ENCODE measurements at regions of chr7 and their contacts with region 1.

Region 1: DNA sequence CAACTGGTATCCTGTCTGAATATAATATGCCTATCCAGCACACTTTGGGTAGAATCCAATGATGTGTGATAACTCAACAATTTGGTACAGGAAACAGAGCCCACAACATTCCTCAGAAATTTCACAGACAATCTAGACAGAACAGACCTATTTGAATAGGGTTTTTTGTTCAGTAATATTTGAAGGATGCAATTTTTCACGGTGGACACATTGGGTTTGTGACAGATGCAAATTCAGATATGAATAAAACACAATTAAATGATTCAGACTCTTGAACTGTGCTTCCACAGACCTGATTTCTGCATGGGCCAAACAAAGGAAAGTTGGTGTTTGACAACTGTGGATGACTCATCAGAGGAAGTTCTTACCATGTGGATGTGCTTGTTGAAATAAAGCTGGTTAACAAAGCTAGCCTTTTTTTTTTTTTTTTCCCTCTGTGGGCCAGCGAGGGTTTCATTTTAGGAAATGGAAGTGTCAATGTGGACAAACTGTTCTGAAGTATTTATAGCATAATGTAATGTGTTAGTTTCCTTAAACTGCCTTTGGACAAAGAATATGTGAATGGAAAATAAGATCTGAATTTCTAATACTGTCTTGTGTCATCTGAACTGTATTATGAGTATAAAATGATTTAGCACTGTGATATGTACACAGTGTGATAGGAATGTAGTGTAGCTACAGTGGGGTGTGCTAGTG is 43.2 kb upstream of the FAM133B start:
- DNase-seq: peak in 1 of 2 donors; percentile 57
- ATAC-seq: peak; percentile 79 to 86 (median 80)
- H3K4me3 ChIP-seq: no peak overlapping the region
- H3K4me3 Mint-ChIP-seq: peak overlapping the region; percentile 68
- H3K27ac ChIP-seq: peak overlapping the region; percentile 37
- H3K27ac Mint-ChIP-seq: peak overlapping the region; percentile 90 to 92
- H3K4me1 ChIP-seq: peaks cover 3% of the 10 kb centered on the region
- H3K4me1 Mint-ChIP-seq: peaks cover 42 to 48% of the 10 kb centered on the region in 2 donors
- H3K27me3 ChIP-seq: no peaks in the 10 kb centered on the region
- H3K27me3 Mint-ChIP-seq: no peaks in the 10 kb centered on the region
- CTCF ChIP-seq: no peak

Region 2: DNA sequence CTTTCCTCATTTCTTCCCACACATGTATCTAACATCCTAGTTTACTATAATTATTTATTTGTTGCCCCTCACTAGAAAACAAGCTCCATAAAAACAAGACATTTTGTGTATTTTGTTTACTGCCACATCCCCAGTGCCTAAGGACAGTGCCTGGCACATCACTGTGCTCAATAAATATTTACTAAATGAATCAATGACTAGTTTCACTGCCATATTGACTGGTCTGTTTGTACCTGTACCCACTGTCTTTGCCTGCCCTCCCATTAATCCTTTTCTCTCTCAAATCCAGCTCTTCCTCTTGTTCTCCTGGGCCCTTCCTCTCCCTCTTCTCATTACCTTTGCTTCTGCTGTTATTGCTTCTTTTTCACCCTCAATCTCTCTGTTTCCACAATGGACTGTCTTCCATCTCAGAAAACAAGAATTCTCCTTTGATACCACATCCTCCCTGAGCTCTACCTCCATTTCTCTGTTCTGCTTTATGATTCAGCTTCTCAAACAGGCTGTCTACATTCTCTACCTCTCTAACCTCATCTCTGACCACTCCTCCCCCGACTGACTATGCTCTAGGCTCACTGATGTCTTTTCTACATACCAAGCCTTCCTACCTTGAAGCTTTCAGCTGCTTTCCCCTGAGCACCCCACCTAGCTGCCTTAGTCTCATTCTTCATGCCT is 34.9 kb before region 1 on chr7:
- intact Hi-C with region 1: no loop called
- DNase-seq: no peak
- ATAC-seq: no peak
- H3K4me3 ChIP-seq: no peak overlapping the region
- H3K4me3 Mint-ChIP-seq: no peak overlapping the region
- H3K27ac ChIP-seq: no peak overlapping the region
- H3K27ac Mint-ChIP-seq: no peak overlapping the region
- H3K4me1 ChIP-seq: no peaks in the 10 kb centered on the region
- H3K4me1 Mint-ChIP-seq: no peaks in the 10 kb centered on the region
- H3K27me3 ChIP-seq: no peaks in the 10 kb centered on the region
- H3K27me3 Mint-ChIP-seq: peaks cover 0 to 1% of the 10 kb centered on the region in 2 donors
- CTCF ChIP-seq: no peak

Region 3: DNA sequence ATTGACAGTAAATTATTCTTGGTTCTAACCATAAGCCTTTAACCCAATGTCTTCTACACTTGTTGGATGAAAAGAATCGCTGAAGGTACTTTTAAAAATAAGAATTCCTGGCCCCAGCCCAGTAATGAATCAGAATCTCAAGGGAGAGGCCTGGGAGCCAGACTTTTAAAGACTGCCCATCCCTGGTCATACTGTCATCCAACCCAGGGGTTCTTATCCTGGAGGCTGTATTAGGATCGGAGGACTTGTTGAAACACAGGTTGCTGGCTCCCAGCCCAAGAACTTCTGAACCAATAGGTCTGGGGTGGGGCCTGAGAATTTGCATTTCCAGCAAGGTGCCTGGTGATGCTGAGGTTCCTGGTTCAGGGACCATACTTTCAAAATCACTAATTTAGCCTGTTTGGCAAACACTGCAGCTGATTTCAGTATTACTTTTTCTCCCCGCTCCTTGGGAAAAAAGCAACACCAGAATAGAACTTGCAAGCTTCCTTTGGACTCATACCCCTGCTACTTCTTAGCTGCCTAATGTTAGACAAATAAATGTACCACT is 36.3 kb after region 1 on chr7:
- intact Hi-C with region 1: loop called (anchors 1 kb)
- DNase-seq: no peak
- ATAC-seq: no peak
- H3K4me3 ChIP-seq: no peak overlapping the region
- H3K4me3 Mint-ChIP-seq: no peak overlapping the region
- H3K27ac ChIP-seq: no peak overlapping the region
- H3K27ac Mint-ChIP-seq: peak overlapping the region in 1 of 2 donors; percentile 15
- H3K4me1 ChIP-seq: peaks cover 9% of the 10 kb centered on the region
- H3K4me1 Mint-ChIP-seq: peaks cover 17 to 24% of the 10 kb centered on the region in 2 donors
- H3K27me3 ChIP-seq: no peaks in the 10 kb centered on the region
- H3K27me3 Mint-ChIP-seq: no peaks in the 10 kb centered on the region
- CTCF ChIP-seq: no peak

Measured in natural killer cell (primary cell).